ENCODE measurements at regions of chr22 and their contacts with region 1.

Region 1: DNA sequence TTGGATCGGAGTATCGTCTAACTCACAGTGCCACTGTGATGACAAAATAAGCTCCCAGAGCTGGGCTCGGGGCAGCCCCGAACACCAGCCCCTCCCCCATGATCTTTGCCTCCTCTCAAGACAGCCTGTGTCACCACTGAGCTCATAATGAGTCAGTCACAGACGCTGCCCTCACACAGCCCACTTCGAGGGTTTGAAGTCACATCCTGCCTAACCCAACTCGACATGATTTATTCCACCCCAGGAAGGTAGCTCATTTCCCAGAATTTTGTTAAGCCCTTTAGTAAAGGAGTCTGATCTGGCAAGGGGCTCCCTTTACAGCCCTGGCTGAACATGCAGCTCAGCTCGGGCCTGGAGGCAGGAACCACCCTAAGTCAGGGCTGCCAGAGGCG is 22.8 kb downstream of the MYH9 start:
- DNase-seq: peak; percentile 80 to 97
- ATAC-seq: peak; percentile 90 to 98 (median 94)
- H3K4me3 ChIP-seq: no peak overlapping the region
- H3K4me3 Mint-ChIP-seq: peak overlapping the region; percentile 77
- H3K27ac ChIP-seq: peak overlapping the region; percentile 84
- H3K27ac Mint-ChIP-seq: peak overlapping the region; percentile 90 to 96
- H3K4me1 ChIP-seq: peaks cover 96% of the 10 kb centered on the region
- H3K4me1 Mint-ChIP-seq: peaks cover 89 to 92% of the 10 kb centered on the region in 2 donors
- H3K27me3 ChIP-seq: no peaks in the 10 kb centered on the region
- H3K27me3 Mint-ChIP-seq: no peaks in the 10 kb centered on the region
- CTCF ChIP-seq: no peak

Region 2: DNA sequence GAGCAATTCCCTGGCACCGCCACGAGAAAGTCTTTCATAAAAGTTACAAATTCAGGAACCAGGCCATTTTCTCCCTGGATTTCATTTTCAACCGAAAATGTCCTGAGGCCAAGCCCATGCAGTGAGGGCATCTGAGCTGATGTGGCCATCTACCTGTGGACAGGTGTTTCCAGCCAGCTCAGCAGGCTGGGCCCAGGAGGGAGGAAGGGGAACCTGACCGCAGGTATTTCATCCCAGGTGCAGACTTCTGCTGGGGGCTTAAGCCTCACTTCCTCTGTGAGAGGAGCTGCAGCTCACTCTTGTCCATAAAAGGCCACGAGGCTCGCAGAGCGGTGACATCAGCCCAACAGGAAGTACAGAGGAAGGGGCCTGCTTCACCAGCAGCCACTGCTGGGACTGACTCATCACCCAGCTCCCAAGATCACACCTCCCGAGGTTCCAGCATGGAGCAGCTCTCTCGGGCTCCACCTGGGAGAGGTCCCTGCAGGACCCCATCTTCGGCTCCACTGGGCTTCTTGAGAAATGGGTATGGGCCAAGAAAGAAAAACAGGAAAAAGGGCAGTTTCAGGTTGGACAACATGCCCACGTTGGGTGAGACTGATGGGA is 33.6 kb before region 1 on chr22:
- intact Hi-C with region 1: loop called (anchors 2 kb)
- DNase-seq: peak; percentile 74 to 91
- ATAC-seq: peak; percentile 59 to 83 (median 73)
- H3K4me3 ChIP-seq: peak overlapping the region; percentile 2
- H3K4me3 Mint-ChIP-seq: peak overlapping the region; percentile 91
- H3K27ac ChIP-seq: peak overlapping the region; percentile 80
- H3K27ac Mint-ChIP-seq: peak overlapping the region; percentile 98 to 100
- H3K4me1 ChIP-seq: peaks cover 91% of the 10 kb centered on the region
- H3K4me1 Mint-ChIP-seq: peaks cover 94 to 95% of the 10 kb centered on the region in 2 donors
- H3K27me3 ChIP-seq: no peaks in the 10 kb centered on the region
- H3K27me3 Mint-ChIP-seq: no peaks in the 10 kb centered on the region
- CTCF ChIP-seq: no peak

Region 3: DNA sequence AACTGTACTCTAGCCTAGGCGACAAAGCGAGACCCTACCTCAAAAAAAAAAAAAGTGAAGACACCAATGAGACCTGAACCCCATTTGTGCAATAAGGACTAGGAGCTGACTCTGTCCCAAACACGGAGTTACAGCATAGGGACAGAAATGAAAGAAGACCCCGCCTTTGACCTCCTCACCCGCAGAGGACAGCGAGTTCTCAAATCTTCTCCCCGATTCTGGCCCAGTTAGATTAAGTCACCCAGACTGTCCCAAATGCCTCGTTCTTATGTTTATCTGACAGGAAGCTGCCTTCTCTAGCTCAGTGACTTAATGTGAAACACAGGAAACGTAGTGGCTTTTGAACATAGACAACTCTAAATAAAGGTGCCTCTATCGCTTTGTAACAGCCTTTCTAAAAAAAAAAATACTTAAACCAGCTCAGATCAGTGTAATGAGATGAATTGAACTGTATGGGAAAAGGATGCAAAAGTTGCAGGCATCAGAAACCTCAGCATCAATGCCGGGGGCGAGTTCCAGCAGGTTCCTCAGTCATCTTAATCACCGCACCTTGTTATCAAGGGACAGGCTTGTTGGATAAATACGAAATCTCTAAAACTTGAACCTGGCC is 12.1 kb after region 1 on chr22:
- intact Hi-C with region 1: loop called (anchors 1 kb)
- DNase-seq: peak in 1 of 2 donors; percentile 89
- ATAC-seq: peak; percentile 82 to 94 (median 92)
- H3K4me3 ChIP-seq: peak overlapping the region; percentile 2
- H3K4me3 Mint-ChIP-seq: peak overlapping the region; percentile 91
- H3K27ac ChIP-seq: peak overlapping the region; percentile 87
- H3K27ac Mint-ChIP-seq: peak overlapping the region; percentile 90 to 100
- H3K4me1 ChIP-seq: peaks cover 96% of the 10 kb centered on the region
- H3K4me1 Mint-ChIP-seq: peaks cover 70 to 76% of the 10 kb centered on the region in 2 donors
- H3K27me3 ChIP-seq: no peaks in the 10 kb centered on the region
- H3K27me3 Mint-ChIP-seq: no peaks in the 10 kb centered on the region
- CTCF ChIP-seq: no peak

Region 4: GRCh38 chr22:36409911-36410756 is 45.1 kb after region 1 on chr22:
- intact Hi-C with region 1: no loop called
- DNase-seq: peak; percentile 67 to 82
- ATAC-seq: peak; percentile 74 to 80 (median 79)
- H3K4me3 ChIP-seq: peak overlapping the region; percentile 23
- H3K4me3 Mint-ChIP-seq: peak overlapping the region; percentile 85
- H3K27ac ChIP-seq: peak overlapping the region; percentile 55
- H3K27ac Mint-ChIP-seq: peak overlapping the region; percentile 86 to 91
- H3K4me1 ChIP-seq: peaks cover 53% of the 10 kb centered on the region
- H3K4me1 Mint-ChIP-seq: peaks cover 39 to 45% of the 10 kb centered on the region in 2 donors
- H3K27me3 ChIP-seq: no peaks in the 10 kb centered on the region
- H3K27me3 Mint-ChIP-seq: no peaks in the 10 kb centered on the region
- CTCF ChIP-seq: no peak

Measured in natural killer cell (primary cell).